ENCODE measurements at regions of chr4 and their contacts with region 1.

Region 1: DNA sequence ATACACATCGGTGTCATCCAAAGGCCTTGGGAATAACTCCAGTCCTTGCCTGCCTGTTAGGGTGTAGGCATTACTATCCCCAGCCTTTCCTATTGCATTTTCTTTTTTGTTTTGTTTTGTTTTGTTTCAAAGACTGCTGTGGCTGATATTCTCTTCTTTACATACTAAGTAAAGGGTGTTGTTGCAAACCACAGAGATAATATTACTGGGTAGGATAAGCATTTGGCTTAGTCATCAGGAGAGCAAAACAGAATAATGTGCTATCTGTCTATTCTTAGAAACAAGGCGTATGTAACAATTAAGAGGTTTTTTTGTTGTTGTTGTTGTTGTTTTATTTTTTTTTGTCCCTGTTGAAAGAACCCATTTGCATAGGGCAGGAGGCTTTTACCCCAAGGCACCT is 41.8 kb downstream of the UGT2B28 start:
- DNase-seq: no peak
- H3K4me3 ChIP-seq: no peak overlapping the region
- CTCF ChIP-seq: no peak

Region 2: GRCh38 chr4:69617083-69617694 is 295.1 kb after region 1 on chr4:
- CTCF ChIA-PET with region 1: interaction called, 25 read pairs
- POLR2A ChIA-PET with region 1: no interaction called
- DNase-seq: no peak
- H3K4me3 ChIP-seq: no peak overlapping the region
- CTCF ChIP-seq: peak; percentile 34

Measured in AG04449 (cell line).